CD8-positive, alpha-beta T cell (primary cell): ENCODE measurements at regions of chr20 and their contacts with region 1.

Region 1: DNA sequence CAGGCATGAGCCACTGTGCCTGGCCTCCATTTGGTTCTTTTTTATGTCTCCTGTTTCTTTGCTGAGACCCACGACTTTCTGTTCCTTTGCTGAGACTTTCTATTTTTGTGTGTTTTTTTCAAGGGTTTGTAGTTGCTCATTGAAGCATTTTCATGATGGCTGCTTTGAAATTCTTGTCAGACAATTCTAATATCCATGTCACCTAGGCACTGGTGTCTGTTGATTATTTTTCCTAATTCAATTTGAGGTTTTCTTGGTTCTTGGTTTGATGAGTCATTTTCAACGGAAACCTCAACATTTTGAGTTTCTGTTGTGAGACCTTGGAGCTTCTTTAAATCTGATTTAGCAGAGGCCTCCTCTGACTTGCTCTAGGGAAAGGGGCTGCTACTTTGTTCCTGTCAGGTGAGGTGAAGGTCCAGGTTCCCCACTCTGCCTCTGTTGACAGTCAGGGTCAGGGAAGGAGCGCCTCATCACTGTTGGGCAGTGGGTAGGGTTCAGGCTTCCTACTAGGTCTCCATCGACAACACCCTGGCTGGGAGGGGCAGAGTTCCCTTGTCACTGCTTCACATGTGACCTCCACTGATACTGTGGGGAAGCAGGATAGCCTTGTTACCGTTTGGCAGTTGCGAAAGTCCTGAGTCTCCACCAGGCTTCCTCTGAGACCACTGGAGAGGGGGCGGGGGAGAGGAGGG is 67.2 kb upstream of the RNF24 start:
- DNase-seq: peak; percentile 16 to 77 (median 47)
- ATAC-seq: peak; percentile 70
- H3K4me3 ChIP-seq: peak overlapping the region in 1 of 2 experiments; percentile 26
- H3K4me3 Mint-ChIP-seq: peak overlapping the region; percentile 32
- H3K27ac ChIP-seq: peak overlapping the region in 1 of 2 experiments; percentile 75
- H3K27ac Mint-ChIP-seq: peak overlapping the region; percentile 82
- H3K4me1 ChIP-seq: peaks cover 12% of the 10 kb centered on the region
- H3K4me1 Mint-ChIP-seq: peaks cover 39% of the 10 kb centered on the region
- H3K27me3 ChIP-seq: no peaks in the 10 kb centered on the region
- H3K27me3 Mint-ChIP-seq: no peaks in the 10 kb centered on the region
- CTCF ChIP-seq: no peak

Region 2: DNA sequence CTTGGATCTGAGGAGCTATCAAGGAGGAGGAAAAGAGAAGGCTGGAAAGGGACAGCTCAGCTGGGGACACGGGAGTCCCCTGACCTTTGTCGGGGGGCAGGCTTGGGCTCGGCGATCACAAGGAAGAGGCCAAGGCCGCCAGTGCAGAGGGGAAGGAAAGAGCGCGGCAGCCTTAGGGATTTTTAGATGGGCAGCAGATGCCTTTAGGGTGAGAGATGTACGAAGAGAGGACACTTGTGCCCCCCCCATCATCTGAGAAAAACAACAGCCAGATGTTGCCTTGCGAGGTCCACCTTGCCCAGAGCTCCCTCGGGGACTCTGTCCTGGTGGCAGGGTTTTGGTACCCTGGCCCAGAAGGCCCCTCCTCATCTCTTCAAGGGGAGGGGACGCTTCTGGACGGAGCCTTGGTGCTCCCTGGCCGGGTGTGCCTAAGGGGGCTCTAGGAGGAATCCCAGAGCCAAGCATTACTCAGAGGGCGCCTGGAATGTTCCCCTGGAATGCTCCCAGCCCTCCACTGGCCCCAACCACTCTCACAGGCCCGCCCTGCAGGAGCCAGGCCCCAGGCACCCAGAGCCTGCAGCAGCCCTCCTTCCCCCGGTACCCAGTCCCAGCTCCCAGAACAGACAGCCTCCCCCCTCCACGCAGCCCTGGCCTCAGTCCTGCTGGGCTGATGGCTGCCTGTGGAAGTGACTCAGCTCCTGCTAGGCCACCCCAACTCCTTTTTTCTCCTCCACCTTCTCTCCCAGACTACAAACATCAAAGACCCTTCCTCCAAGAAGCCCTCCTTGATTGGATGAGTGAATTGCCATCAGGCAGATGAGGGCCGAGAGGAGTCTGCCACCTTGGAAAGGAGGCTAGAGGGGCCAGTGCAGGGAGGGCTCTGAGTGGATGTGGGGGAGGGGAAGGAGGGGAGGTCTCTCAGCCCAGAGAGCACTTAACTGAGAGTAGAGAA is 402.5 kb before region 1 on chr20:
- CTCF ChIA-PET with region 1: interaction called, 13 read pairs
- POLR2A ChIA-PET with region 1: no interaction called
- intact Hi-C with region 1: loop called (anchors 1 kb)
- DNase-seq: no peak
- ATAC-seq: no peak
- H3K4me3 ChIP-seq: no peak overlapping the region
- H3K4me3 Mint-ChIP-seq: no peak overlapping the region
- H3K27ac ChIP-seq: no peak overlapping the region
- H3K27ac Mint-ChIP-seq: no peak overlapping the region
- H3K4me1 ChIP-seq: peaks cover 4% of the 10 kb centered on the region
- H3K4me1 Mint-ChIP-seq: peaks cover 10% of the 10 kb centered on the region
- H3K27me3 ChIP-seq: peaks cover 0 to 10% of the 10 kb centered on the region in 2 experiments
- H3K27me3 Mint-ChIP-seq: peaks cover 45% of the 10 kb centered on the region
- CTCF ChIP-seq: no peak

Region 3: GRCh38 chr20:3753098-3753980 is 329.2 kb before region 1 on chr20:
- CTCF ChIA-PET with region 1: interaction called, 8 read pairs
- POLR2A ChIA-PET with region 1: no interaction called
- intact Hi-C with region 1: loop called in 1 of 2 experiments (anchors 1 kb)
- DNase-seq: peak; percentile 37 to 82 (median 67)
- ATAC-seq: peak; percentile 87
- H3K4me3 ChIP-seq: no peak overlapping the region
- H3K4me3 Mint-ChIP-seq: no peak overlapping the region
- H3K27ac ChIP-seq: no peak overlapping the region
- H3K27ac Mint-ChIP-seq: no peak overlapping the region
- H3K4me1 ChIP-seq: no peaks in the 10 kb centered on the region
- H3K4me1 Mint-ChIP-seq: peaks cover 4% of the 10 kb centered on the region
- H3K27me3 ChIP-seq: no peaks in the 10 kb centered on the region
- H3K27me3 Mint-ChIP-seq: no peaks in the 10 kb centered on the region
- CTCF ChIP-seq: peak; percentile 57

Region 4: DNA sequence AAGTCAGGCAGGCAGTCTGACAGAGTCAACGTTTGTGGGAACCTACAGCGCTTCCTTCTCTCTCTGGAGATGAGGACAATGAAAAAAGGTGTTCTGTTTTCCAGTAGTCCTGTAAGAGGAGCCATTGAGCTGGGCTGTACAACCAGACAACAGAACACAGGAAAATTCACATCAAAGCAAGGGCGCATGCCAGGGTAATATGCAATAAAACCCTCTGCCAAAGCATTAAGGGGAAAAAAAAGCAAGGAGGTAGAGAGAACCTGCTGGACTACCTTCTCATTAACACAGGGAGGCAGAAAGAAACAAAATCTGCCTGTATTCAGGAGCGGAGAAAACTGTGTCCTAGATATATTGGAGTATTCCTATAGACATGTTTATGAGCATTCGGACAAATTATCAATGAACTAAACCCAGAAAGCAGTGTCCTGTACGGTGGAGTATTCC is 68.5 kb before region 1 on chr20:
- CTCF ChIA-PET with region 1: interaction called, 18 read pairs
- POLR2A ChIA-PET with region 1: interaction called, 5 read pairs
- intact Hi-C with region 1: loop called (anchors 1 kb)
- DNase-seq: peak in 5 of 9 experiments; percentile 19 to 65 (median 34)
- ATAC-seq: no peak
- H3K4me3 ChIP-seq: peak overlapping the region in 1 of 2 experiments; percentile 3
- H3K4me3 Mint-ChIP-seq: peak overlapping the region; percentile 88
- H3K27ac ChIP-seq: peak overlapping the region in 1 of 2 experiments; percentile 23
- H3K27ac Mint-ChIP-seq: peak overlapping the region; percentile 4
- H3K4me1 ChIP-seq: peaks cover 17% of the 10 kb centered on the region
- H3K4me1 Mint-ChIP-seq: peaks cover 34% of the 10 kb centered on the region
- H3K27me3 ChIP-seq: no peaks in the 10 kb centered on the region
- H3K27me3 Mint-ChIP-seq: no peaks in the 10 kb centered on the region
- CTCF ChIP-seq: peak; percentile 35

Region 5: DNA sequence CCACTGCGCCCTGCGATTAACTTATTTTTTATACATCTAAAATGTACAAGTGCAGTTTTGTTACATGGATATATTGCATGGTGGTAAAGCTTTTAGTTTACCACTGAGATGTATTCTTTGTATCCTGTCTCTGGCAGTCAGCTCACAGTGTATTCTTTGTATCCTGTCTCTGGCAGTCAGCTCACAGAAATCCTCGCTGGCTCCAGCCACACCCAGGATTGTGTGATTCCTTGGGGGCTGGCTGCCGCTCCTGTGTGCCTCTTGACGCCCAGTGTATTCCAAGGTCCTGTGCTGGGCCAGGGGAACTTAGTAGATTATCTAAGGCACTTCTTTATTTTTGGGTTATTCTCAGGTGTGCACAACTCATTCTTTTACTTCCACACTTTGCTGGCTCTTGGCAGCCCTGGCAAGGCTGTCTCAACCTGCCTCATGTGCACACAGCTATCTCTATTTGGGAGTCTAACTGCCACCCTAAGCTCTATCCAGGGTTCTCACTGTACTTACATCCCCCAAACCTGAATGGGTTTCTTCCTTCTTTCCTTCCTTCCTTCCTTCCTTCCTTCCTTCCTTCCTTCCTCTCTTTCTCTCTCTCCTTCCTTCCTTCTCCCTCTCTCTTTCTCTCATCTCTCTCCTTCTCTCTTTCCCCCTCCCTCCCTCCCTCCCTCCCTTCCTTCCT is 54.8 kb before region 1 on chr20:
- CTCF ChIA-PET with region 1: no interaction called
- POLR2A ChIA-PET with region 1: no interaction called
- intact Hi-C with region 1: no loop called
- DNase-seq: peak in 1 of 9 experiments; percentile 21
- ATAC-seq: no peak
- H3K4me3 ChIP-seq: no peak overlapping the region
- H3K4me3 Mint-ChIP-seq: no peak overlapping the region
- H3K27ac ChIP-seq: no peak overlapping the region
- H3K27ac Mint-ChIP-seq: no peak overlapping the region
- H3K4me1 ChIP-seq: no peaks in the 10 kb centered on the region
- H3K4me1 Mint-ChIP-seq: no peaks in the 10 kb centered on the region
- H3K27me3 ChIP-seq: no peaks in the 10 kb centered on the region
- H3K27me3 Mint-ChIP-seq: peaks cover 5% of the 10 kb centered on the region
- CTCF ChIP-seq: no peak

Region 6: GRCh38 chr20:4043796-4044195 is 38.8 kb before region 1 on chr20:
- CTCF ChIA-PET with region 1: interaction called, 12 read pairs
- POLR2A ChIA-PET with region 1: no interaction called
- intact Hi-C with region 1: loop called (anchors 2 kb)
- DNase-seq: no peak
- ATAC-seq: no peak
- H3K4me3 ChIP-seq: no peak overlapping the region
- H3K4me3 Mint-ChIP-seq: no peak overlapping the region
- H3K27ac ChIP-seq: no peak overlapping the region
- H3K27ac Mint-ChIP-seq: no peak overlapping the region
- H3K4me1 ChIP-seq: peaks cover 2% of the 10 kb centered on the region
- H3K4me1 Mint-ChIP-seq: peaks cover 3% of the 10 kb centered on the region
- H3K27me3 ChIP-seq: no peaks in the 10 kb centered on the region
- H3K27me3 Mint-ChIP-seq: no peaks in the 10 kb centered on the region
- CTCF ChIP-seq: no peak

Region 7: DNA sequence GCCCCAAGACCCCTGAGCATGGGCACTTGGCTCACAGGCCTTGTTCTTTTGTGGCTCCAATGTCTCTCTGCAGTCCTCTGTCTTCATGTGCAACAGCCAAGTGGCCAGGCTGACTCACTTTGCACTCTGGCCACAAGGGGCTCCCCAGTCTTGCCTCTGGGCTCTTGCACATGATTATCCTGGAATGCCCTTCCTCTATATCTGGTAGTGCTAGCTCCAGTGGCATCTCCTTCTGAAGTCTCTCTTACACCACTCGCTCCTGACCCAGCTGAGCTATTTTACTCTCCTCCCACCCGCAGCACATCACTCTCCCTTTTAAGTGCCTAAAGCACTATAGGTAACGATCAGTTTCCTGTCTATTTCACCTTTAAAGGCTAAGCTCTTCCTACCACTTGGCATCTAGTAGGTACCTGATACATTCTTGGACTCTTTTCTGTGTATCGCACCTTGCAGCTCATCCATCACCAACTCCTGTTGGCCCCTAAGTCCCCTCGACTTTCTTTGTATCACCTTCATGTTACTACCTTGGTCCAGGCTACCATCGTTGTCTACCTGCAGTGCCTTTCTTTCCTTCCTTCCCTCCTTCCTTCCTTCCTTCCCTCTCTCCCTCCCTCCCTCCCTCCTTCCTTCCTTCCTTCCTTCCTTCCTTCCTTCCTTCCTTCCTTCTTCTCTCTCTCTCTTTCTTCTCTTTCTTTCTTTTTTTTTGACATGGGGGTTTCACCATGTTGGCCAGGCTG is 144.7 kb after region 1 on chr20:
- CTCF ChIA-PET with region 1: no interaction called
- POLR2A ChIA-PET with region 1: no interaction called
- intact Hi-C with region 1: no loop called
- DNase-seq: no peak
- ATAC-seq: no peak
- H3K4me3 ChIP-seq: no peak overlapping the region
- H3K4me3 Mint-ChIP-seq: no peak overlapping the region
- H3K27ac ChIP-seq: no peak overlapping the region
- H3K27ac Mint-ChIP-seq: no peak overlapping the region
- H3K4me1 ChIP-seq: no peaks in the 10 kb centered on the region
- H3K4me1 Mint-ChIP-seq: peaks cover 2% of the 10 kb centered on the region
- H3K27me3 ChIP-seq: peaks cover 0 to 4% of the 10 kb centered on the region in 2 experiments
- H3K27me3 Mint-ChIP-seq: peaks cover 25% of the 10 kb centered on the region
- CTCF ChIP-seq: no peak